ENCODE measurements at regions of chr15 and their contacts with region 1.

Region 1: DNA sequence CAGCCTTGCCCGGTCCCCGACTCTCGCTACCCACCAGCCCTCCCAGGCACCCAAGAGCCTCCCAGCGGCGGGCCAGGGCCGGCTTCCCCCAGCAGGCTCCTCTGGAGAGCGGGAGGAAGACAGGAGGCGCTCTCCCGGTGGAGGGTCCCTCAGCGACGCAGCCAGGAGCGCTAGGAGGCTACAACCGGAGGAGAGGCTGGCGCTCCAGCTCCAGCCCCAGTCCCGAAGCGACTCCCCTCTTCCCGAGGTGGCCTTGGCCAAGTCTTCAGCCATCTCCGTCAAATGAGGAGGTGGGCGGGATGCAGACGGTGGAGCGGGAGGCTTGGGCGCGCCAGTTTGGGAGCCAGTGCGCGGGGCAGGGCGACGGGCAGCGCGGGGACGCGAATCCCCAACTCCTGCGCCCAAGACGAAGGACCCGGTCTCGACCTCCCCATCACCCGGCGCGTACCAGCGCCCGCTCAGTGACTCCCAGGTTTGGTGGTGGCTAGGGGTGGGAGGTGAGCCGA is 722 bp downstream of the CHRNA3 start:
- DNase-seq: no peak
- H3K4me3 ChIP-seq: peak overlapping the region; percentile 21 to 65 (median 39)
- H3K27ac ChIP-seq: no peak overlapping the region
- H3K4me1 ChIP-seq: peaks cover 0 to 3% of the 10 kb centered on the region in 2 donors
- H3K27me3 ChIP-seq: peaks cover 4 to 39% of the 10 kb centered on the region in 2 donors
- CTCF ChIP-seq: no peak
- POLR2A ChIP-seq: no peak

Region 2: DNA sequence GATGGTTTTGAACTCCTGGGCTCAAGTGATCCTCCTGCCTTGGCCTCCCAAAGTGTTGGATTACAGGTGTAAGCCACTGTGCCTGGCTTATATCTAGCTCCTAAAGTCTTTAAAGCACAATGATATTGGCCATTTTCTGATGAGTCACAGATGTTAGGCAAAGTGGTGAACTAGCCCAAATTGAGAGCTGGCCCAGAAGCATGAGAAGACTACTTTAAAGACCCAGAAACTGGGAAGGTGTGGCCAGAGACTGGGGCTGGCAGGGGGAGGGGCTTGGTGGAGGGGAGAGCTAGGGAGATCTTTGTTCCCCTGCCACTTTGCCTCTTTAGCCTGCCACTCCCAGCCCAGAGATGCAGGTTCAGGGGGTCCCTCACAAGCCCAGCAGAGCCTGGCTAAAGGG is 20.9 kb before region 1 on chr15:
- intact Hi-C with region 1: no loop called
- DNase-seq: no peak
- H3K4me3 ChIP-seq: no peak overlapping the region
- H3K27ac ChIP-seq: no peak overlapping the region
- H3K4me1 ChIP-seq: no peaks in the 10 kb centered on the region
- H3K27me3 ChIP-seq: no peaks in the 10 kb centered on the region
- CTCF ChIP-seq: no peak
- POLR2A ChIP-seq: no peak

Region 3: DNA sequence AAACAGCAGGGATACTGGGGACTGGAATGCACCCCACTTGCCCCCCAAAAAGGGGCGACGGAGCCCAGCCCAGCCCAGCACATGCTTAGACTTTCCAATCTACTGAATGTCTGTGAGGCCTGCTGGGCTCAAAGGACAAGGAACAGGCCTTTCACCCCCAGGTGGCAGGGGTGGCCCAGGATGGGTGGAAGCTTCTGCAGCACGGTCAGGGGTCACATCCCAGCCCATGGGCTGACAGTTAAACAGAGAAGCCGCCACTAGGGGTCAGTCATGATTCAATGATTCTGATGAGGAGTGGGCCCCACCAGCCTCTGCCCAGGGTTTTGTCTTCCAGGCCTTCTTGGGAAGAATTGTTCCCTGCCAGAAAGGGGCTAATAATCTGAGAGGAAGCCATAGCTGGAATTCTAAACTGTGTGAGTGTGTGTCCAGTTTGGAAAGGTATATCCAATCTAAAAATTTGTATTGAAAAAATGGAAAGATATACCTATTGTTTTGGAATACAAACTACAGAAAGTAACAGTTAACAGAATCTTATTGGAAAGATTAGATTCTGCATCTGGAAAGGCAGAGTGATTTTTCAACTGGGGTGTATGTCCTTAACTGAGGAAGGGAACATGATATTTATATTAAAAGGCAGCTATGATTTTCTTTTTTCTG is 18.7 kb after region 1 on chr15:
- intact Hi-C with region 1: loop called (anchors 1 kb)
- DNase-seq: no peak
- H3K4me3 ChIP-seq: no peak overlapping the region
- H3K27ac ChIP-seq: no peak overlapping the region
- H3K4me1 ChIP-seq: peaks cover 0 to 10% of the 10 kb centered on the region in 2 donors
- H3K27me3 ChIP-seq: no peaks in the 10 kb centered on the region
- CTCF ChIP-seq: peak in 1 of 3 donors; percentile 25
- POLR2A ChIP-seq: no peak

Region 4: GRCh38 chr15:78654272-78654671 is 34.2 kb after region 1 on chr15:
- intact Hi-C with region 1: no loop called
- DNase-seq: no peak
- H3K4me3 ChIP-seq: no peak overlapping the region
- H3K27ac ChIP-seq: no peak overlapping the region
- H3K4me1 ChIP-seq: no peaks in the 10 kb centered on the region
- H3K27me3 ChIP-seq: peaks cover 0 to 8% of the 10 kb centered on the region in 2 donors
- CTCF ChIP-seq: no peak
- POLR2A ChIP-seq: no peak

Region 5: DNA sequence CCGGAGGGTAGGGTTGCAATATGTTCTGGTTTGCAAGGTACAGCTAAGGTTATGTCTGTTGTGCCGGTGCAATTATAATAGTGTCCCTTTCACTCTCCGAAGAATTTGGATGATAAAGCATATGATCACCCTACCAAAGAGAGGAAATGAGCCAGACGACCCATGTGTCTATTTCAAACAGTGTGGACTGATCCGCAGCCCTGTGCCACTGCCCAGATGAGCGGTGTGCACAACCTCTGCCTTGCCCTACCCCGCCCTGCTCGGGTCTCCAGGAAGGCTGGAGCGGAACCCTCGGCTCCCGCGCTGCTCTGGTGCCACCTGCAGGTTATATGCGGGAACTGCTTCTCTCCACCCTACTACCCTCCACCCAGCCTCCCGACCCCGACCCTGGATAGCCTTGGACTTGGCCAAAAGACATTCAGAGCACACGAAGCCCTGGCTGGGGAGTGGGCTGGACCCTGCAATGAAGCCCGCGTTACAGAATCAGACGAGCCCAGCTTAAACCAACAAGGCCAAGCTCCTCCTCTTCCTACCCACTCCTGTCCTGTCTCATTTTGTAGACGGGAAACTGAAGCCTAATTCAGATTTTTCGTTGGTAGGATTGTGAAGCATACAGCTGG is 89.3 kb after region 1 on chr15:
- intact Hi-C with region 1: loop called (anchors 10 kb)
- DNase-seq: peak in 1 of 2 donors; percentile 70
- H3K4me3 ChIP-seq: peak overlapping the region in 1 of 3 donors; percentile 29
- H3K27ac ChIP-seq: no peak overlapping the region
- H3K4me1 ChIP-seq: no peaks in the 10 kb centered on the region
- H3K27me3 ChIP-seq: peaks cover 0 to 5% of the 10 kb centered on the region in 2 donors
- CTCF ChIP-seq: peak; percentile 63 to 89 (median 86)
- POLR2A ChIP-seq: no peak

Region 6: GRCh38 chr15:78950904-78951840 is 331.1 kb after region 1 on chr15:
- intact Hi-C with region 1: no loop called
- DNase-seq: no peak
- H3K4me3 ChIP-seq: no peak overlapping the region
- H3K27ac ChIP-seq: peak overlapping the region; percentile 9 to 13
- H3K4me1 ChIP-seq: peaks cover 0 to 5% of the 10 kb centered on the region in 2 donors
- H3K27me3 ChIP-seq: no peaks in the 10 kb centered on the region
- CTCF ChIP-seq: peak in 1 of 3 donors; percentile 21
- POLR2A ChIP-seq: no peak